ENCODE measurements at regions of chr11 and their contacts with region 1.

Region 1: DNA sequence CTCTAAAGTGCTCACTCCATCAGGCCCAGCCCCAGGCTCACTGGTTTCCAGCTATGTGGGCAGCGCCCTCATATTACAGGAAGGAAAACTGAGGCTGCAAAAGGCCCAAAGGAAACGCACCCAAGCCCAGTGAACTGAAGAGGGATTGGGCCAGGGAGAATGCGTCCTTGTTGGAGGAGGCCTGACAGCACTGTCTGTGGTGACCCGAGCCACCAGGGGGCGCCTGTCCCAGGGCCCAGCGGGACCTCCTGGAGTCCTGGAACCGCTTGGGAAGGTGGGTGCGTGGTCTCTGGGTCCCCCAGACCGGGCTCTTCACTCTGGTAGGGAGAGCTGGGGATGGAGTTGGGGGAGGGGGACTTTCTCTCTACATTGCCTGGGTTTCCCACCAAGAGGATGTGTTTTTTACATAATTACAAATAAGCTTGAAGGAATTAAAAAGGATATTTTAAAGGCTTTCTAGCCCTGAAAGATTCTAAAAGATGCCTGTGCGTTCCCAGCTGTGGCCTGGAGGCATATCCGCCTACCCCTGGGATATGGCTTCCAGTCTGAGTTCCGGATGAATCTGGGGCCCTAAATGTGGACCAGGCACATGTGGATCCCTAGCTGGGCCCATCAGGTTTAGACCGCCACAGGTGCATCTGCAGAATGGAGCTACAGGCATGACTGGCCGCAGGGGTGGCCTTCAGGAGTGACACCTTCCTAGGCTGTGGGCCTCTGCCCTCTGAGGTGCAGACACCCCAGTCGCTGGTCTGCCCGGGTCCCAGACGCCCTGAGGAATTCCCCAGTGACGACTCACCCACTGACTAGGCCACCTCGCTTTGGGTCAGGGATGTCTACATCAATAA is 4.2 kb downstream of the SPI1 start:
- DNase-seq: peak; percentile 83 to 87
- H3K4me3 ChIP-seq: no peak overlapping the region
- H3K27ac ChIP-seq: peak overlapping the region in 1 of 3 donors; percentile 11
- H3K4me1 ChIP-seq: peaks cover 19 to 28% of the 10 kb centered on the region in 2 donors
- H3K27me3 ChIP-seq: no peaks in the 10 kb centered on the region
- CTCF ChIP-seq: peak; percentile 80 to 97 (median 86)
- POLR2A ChIP-seq: no peak

Region 2: DNA sequence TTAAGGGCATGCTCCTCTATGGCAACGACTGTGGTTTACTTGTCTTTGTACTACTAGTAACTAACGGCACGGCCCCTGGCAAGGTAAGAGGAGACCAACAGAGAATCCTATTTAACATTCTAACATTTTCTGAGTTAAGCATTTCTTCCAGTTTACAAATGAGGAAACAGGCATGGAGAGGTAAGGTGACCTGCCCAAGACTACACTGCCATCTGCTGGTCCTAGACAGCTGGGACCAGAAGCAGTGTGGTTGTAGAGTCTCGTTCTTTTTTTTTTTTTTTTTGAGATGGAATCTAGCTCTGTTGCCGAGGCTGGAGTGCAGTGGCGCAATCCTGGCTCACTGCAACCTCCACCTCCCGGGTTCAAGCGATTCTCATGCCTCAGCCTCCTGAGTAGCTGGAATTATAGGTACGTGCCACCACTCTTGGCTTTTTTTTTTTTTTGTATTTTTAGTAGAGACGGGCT is 80.1 kb after region 1 on chr11:
- intact Hi-C with region 1: loop called (anchors 5 kb)
- DNase-seq: peak; percentile 80 to 81
- H3K4me3 ChIP-seq: no peak overlapping the region
- H3K27ac ChIP-seq: no peak overlapping the region
- H3K4me1 ChIP-seq: no peaks in the 10 kb centered on the region
- H3K27me3 ChIP-seq: no peaks in the 10 kb centered on the region
- CTCF ChIP-seq: peak; percentile 48 to 94 (median 76)
- POLR2A ChIP-seq: no peak